Vagina (tissue), 2 donors: ENCODE measurements at regions of chr9 and their contacts with region 1.

Region 1: GRCh38 chr9:3370715-3371114 is 155.1 kb downstream of the RFX3 start:
- DNase-seq: no peak
- H3K4me3 ChIP-seq: no peak overlapping the region
- H3K27ac ChIP-seq: no peak overlapping the region
- H3K4me1 ChIP-seq: no peaks in the 10 kb centered on the region
- H3K27me3 ChIP-seq: no peaks in the 10 kb centered on the region
- CTCF ChIP-seq: no peak
- POLR2A ChIP-seq: no peak

Region 2: GRCh38 chr9:1869843-1870242 is 1500.9 kb before region 1 on chr9:
- intact Hi-C with region 1: loop called (anchors 5 kb)
- DNase-seq: no peak
- H3K4me3 ChIP-seq: no peak overlapping the region
- H3K27ac ChIP-seq: no peak overlapping the region
- H3K4me1 ChIP-seq: no peaks in the 10 kb centered on the region
- H3K27me3 ChIP-seq: no peaks in the 10 kb centered on the region
- CTCF ChIP-seq: no peak
- POLR2A ChIP-seq: no peak

Region 3: DNA sequence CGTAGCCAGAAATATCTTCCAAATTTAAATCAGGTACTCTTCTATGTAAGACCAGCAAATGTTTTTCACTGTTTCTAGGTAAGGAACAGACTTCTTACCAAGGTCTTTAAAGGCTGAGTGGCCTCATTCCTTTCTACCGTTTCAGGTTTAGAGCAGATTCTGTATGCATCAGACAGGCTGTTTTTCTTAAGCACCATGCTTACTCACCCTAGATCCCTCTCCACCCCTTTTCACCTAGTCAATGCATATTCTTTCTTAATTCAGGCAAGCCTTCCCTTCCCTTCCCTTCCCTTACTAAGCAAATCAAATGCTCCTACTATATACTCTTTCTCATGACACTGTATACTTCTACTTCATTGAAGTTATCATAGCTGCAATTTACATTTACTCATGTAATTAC is 84.4 kb after region 1 on chr9:
- intact Hi-C with region 1: no loop called
- DNase-seq: no peak
- H3K4me3 ChIP-seq: no peak overlapping the region
- H3K27ac ChIP-seq: no peak overlapping the region
- H3K4me1 ChIP-seq: peaks cover 7% of the 10 kb centered on the region
- H3K27me3 ChIP-seq: no peaks in the 10 kb centered on the region
- CTCF ChIP-seq: no peak
- POLR2A ChIP-seq: no peak

Region 4: GRCh38 chr9:4662108-4662988 is 1291.6 kb after region 1 on chr9 and contains the start of gene PLPP6:
- intact Hi-C with region 1: no loop called
- DNase-seq: peak in 1 of 2 donors; percentile 91
- H3K4me3 ChIP-seq: peak within 1 kb of the TSS; percentile 72 to 84
- H3K27ac ChIP-seq: peak within 1 kb of the TSS; percentile 76
- H3K4me1 ChIP-seq: peaks cover 48% of the 10 kb centered on the region
- H3K27me3 ChIP-seq: no peaks in the 10 kb centered on the region
- CTCF ChIP-seq: peak; percentile 52 to 60 (median 55)
- POLR2A ChIP-seq: peak in 1 of 2 donors; percentile 46
- total RNA-seq, gene PLPP6: 7.1 TPM